Activated CD8-positive, alpha-beta T cell treated with anti-CD3 and anti-CD28 coated beads for 36 hours (primary cell): ENCODE measurements at regions of chr1 and their contacts with region 1.

Region 1: GRCh38 chr1:29043274-29043965 is 80.3 kb downstream of the TMEM200B start:
- DNase-seq: no peak
- ATAC-seq: no peak
- H3K4me3 Mint-ChIP-seq: no peak overlapping the region
- H3K27ac Mint-ChIP-seq: peak overlapping the region; percentile 73
- H3K4me1 Mint-ChIP-seq: peaks cover 27% of the 10 kb centered on the region
- H3K27me3 Mint-ChIP-seq: no peaks in the 10 kb centered on the region
- CTCF ChIP-seq: no peak

Region 2: DNA sequence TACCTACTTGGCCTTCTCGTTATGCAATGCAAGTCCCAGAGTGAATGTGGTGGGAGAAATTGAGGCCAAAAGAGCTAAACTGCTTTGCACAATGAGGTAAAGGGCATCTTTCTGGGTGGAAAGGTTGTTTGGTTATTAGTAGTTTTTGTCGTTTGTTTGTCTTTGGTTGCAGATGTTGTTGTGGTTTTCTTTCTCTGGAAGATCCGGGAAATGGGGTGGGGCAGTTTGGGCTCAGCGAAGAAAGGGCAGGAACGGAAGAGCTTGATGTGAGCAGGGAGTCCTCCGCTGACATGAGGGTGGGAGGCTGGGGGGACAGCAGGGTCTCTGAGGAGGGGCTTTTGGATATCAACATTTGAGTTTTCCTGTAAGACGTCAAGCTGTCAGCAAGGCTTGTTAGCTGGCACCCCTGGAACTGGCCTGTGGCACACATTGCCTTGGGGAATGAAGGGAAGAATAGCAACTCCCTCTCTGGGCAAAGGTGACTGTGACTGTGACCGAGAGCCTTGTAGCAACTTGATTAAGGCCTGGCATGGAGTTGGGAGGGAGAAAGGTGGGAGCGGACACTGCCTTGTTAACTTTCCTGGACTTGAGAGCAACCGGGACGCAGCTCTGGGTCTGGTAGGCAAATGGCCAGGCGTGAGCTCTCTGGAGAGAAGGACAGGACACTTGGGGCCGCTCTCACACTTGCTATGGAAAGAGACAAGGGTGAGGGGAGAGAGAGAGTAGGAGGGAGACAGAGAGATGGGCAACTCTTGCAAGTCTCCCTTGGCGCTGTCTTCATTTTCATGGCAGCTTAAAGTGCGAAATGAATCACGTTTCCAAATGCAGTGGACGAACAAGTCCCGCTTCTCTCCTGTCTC is 246.8 kb before region 1 on chr1:
- CTCF ChIA-PET with region 1: no interaction called
- POLR2A ChIA-PET with region 1: no interaction called
- intact Hi-C with region 1: no loop called
- DNase-seq: no peak
- ATAC-seq: no peak
- H3K4me3 Mint-ChIP-seq: no peak overlapping the region
- H3K27ac Mint-ChIP-seq: no peak overlapping the region
- H3K4me1 Mint-ChIP-seq: no peaks in the 10 kb centered on the region
- H3K27me3 Mint-ChIP-seq: peaks cover 2% of the 10 kb centered on the region
- CTCF ChIP-seq: no peak

Region 3: DNA sequence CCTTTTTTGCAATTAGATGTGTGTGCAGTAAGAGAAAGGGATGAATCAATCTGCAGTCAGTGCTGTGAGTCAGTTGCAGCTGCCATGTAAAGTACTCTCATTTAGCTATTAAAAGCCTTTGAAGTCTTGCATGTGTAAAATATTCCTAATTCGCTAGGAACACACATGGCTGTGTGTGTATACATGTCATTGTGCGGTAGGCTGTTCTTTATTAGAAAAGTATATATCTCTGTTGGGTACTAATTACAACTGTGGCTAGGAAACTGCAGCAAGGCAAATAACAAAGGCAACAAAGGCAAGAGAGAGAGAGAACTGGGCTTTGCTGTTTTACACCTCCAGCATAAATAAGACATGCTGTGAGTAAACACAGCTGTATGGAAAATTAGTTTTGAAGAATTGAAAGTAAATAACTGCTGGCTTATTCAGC is 87.4 kb before region 1 on chr1:
- CTCF ChIA-PET with region 1: no interaction called
- POLR2A ChIA-PET with region 1: no interaction called
- intact Hi-C with region 1: no loop called
- DNase-seq: no peak
- ATAC-seq: peak; percentile 67
- H3K4me3 Mint-ChIP-seq: no peak overlapping the region
- H3K27ac Mint-ChIP-seq: no peak overlapping the region
- H3K4me1 Mint-ChIP-seq: peaks cover 45% of the 10 kb centered on the region
- H3K27me3 Mint-ChIP-seq: no peaks in the 10 kb centered on the region
- CTCF ChIP-seq: no peak

Region 4: DNA sequence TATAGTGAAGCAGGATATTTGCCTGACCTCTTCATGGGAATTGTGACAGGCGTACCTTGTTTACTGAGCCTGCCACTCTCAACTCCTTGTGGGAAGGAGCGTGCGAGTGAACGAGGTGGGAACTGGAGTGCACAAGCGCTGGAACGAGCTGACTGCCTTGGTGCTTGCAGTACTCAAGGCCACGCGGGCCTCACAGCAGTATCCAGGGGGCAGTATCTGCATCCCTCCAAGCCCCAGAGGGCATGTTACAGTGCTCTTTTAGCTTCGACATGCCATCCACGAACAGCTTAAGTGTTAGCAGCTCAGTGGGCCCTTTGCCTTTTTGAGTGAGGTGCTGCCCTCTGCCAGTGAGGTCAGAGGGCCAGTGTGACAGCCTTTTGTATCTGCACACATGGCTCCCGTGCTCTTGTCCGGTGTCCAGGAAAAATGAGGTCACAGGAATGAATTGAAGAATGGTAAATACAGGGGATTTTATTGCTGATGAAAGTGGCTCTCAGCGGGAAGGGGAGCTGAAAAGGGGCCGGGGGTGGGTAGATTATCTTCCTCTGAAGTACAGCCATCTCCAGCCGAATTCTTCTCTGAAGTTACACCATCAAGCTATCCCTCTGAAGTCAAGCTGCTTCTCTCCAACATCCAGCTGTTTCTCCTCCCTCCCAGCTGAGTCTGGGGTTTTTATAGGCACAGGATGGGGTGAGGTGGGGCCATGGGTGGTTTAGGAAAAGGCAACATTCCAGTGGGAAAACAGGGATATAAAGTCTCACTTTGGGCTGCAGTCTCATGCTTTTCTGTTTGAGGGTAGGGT is 59.7 kb before region 1 on chr1:
- CTCF ChIA-PET with region 1: no interaction called
- POLR2A ChIA-PET with region 1: no interaction called
- intact Hi-C with region 1: no loop called
- DNase-seq: no peak
- ATAC-seq: no peak
- H3K4me3 Mint-ChIP-seq: no peak overlapping the region
- H3K27ac Mint-ChIP-seq: peak overlapping the region; percentile 10
- H3K4me1 Mint-ChIP-seq: peaks cover 55% of the 10 kb centered on the region
- H3K27me3 Mint-ChIP-seq: no peaks in the 10 kb centered on the region
- CTCF ChIP-seq: no peak

Region 5: DNA sequence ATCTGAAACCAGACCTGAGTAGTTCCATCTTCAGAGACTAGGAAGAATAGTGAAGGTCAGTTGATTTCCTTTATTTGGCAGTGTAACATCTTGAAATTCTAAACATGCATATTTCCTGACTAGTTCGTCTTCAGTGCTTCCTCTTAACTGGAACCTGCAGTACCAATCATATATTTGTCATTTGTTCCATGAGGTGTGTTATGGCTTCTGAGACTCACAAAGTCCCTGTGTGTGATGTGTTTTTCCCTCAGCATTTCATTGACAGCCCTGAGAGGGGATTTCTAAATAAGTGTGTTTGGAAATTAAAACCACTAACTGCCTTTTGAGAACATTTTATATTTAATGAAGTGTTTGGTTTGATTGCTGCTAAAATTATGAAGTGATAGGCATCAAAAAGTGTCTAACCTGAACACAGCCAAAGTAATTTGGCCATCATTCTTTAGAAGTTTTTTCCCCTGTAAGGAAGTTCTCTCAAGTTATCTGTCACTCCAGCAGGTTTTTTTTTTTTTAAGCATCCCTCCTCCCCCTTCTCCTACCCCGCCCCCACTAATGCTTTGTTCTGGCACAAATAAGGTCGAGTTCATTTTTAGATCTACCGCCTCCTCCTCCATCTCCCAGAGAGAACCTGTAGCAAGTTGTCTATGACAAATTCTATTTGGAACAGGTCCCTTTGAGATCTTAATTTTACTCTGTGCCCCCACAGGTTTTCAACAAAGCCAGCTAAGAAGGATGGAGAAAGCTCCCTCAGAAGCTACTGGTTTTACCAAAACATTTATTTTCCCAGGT is 18.9 kb after region 1 on chr1:
- CTCF ChIA-PET with region 1: no interaction called
- POLR2A ChIA-PET with region 1: no interaction called
- intact Hi-C with region 1: no loop called
- DNase-seq: peak; percentile 66
- ATAC-seq: peak; percentile 88
- H3K4me3 Mint-ChIP-seq: peak overlapping the region; percentile 63
- H3K27ac Mint-ChIP-seq: peak overlapping the region; percentile 95
- H3K4me1 Mint-ChIP-seq: peaks cover 56% of the 10 kb centered on the region
- H3K27me3 Mint-ChIP-seq: no peaks in the 10 kb centered on the region
- CTCF ChIP-seq: no peak

Region 6: DNA sequence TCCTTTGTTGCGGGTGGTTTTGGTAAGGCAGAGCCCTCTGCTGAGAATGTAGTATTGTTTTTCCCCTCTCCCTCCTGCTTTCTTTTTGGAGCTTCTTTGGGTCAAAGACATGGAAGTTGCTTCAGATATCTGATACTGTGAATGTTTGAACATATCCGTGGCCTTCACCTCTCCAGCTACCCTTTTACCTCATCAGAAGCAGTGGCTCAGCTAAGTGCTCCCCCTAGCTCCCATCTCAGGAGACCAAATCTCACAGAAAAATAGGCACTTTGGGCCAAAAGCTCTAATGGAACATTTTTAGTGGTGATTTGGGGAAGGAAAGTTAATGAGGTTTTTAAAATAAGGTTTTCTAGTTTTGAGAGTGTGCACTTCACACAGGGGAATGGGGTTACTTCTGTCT is 74.0 kb after region 1 on chr1:
- CTCF ChIA-PET with region 1: no interaction called
- POLR2A ChIA-PET with region 1: no interaction called
- intact Hi-C with region 1: loop called (anchors 10 kb)
- DNase-seq: no peak
- ATAC-seq: no peak
- H3K4me3 Mint-ChIP-seq: no peak overlapping the region
- H3K27ac Mint-ChIP-seq: peak overlapping the region; percentile 29
- H3K4me1 Mint-ChIP-seq: peaks cover 10% of the 10 kb centered on the region
- H3K27me3 Mint-ChIP-seq: peaks cover 2% of the 10 kb centered on the region
- CTCF ChIP-seq: no peak